ENCODE measurements at regions of chr3 and their contacts with region 1.

Region 1: GRCh38 chr3:58101499-58102389 is 93.5 kb downstream of the FLNB start:
- DNase-seq: no peak
- H3K4me3 Mint-ChIP-seq: no peak overlapping the region
- H3K27ac Mint-ChIP-seq: no peak overlapping the region
- H3K4me1 Mint-ChIP-seq: peaks cover 4% of the 10 kb centered on the region
- H3K27me3 Mint-ChIP-seq: no peaks in the 10 kb centered on the region

Region 2: GRCh38 chr3:57877116-57877515 is 224.6 kb before region 1 on chr3:
- CTCF ChIA-PET with region 1: no interaction called
- POLR2A ChIA-PET with region 1: no interaction called
- DNase-seq: no peak
- H3K4me3 Mint-ChIP-seq: no peak overlapping the region
- H3K27ac Mint-ChIP-seq: no peak overlapping the region
- H3K4me1 Mint-ChIP-seq: no peaks in the 10 kb centered on the region
- H3K27me3 Mint-ChIP-seq: no peaks in the 10 kb centered on the region

Region 3: GRCh38 chr3:58008140-58009025 is 93.4 kb before region 1 on chr3 and contains the start of gene FLNB:
- CTCF ChIA-PET with region 1: no interaction called
- POLR2A ChIA-PET with region 1: no interaction called
- DNase-seq: peak; percentile 77
- H3K4me3 Mint-ChIP-seq: peak within 1 kb of the TSS; percentile 85
- H3K27ac Mint-ChIP-seq: peak within 1 kb of the TSS; percentile 90
- H3K4me1 Mint-ChIP-seq: peaks cover 43% of the 10 kb centered on the region
- H3K27me3 Mint-ChIP-seq: no peaks in the 10 kb centered on the region
- total RNA-seq, gene FLNB: 27.2 to 28.1 TPM

Region 4: DNA sequence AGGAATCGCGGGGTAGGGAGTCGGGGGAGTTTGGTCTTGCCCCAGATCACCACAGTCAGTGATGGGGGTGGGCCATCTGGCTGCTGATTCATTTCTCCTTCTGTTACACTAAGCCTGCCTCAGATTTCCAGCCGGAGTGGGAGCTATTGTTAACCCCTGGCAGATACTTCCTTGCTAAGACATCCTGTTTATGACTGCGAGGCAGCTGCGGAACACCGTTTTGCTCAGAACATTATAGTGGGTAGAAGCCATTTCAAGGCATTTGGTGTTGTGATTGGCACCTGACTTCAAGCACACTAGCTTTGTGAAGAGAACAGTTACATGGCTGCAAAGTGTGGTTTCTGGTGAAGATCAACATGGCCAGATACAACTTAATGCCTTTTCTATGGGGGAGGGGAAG is 19.7 kb before region 1 on chr3:
- CTCF ChIA-PET with region 1: interaction called, 10 read pairs
- POLR2A ChIA-PET with region 1: no interaction called
- DNase-seq: peak; percentile 52
- H3K4me3 Mint-ChIP-seq: no peak overlapping the region
- H3K27ac Mint-ChIP-seq: peak overlapping the region; percentile 80
- H3K4me1 Mint-ChIP-seq: peaks cover 52% of the 10 kb centered on the region
- H3K27me3 Mint-ChIP-seq: no peaks in the 10 kb centered on the region